ENCODE measurements at regions of chr1 and their contacts with region 1.

Region 1: GRCh38 chr1:27662707-27663393 is 9.1 kb downstream of the IFI6 start:
- DNase-seq: peak; percentile 75 to 91 (median 82)
- ATAC-seq: peak; percentile 76
- H3K4me3 ChIP-seq: no peak overlapping the region
- H3K27ac ChIP-seq: peak overlapping the region; percentile 30; the same call in 2 of the 3 replicates
- H3K4me1 ChIP-seq: peaks cover 27 to 39% of the 10 kb centered on the region in 2 experiments
- H3K27me3 ChIP-seq: no peaks in the 10 kb centered on the region
- CTCF ChIP-seq: peak; percentile 92 to 97 (median 96)
- EP300 ChIP-seq: no peak
- POLR2A ChIP-seq: no peak
- RAD21 ChIP-seq: peak; percentile 98 to 99

Region 2: GRCh38 chr1:27300341-27301051 is 362.4 kb before region 1 on chr1:
- CTCF ChIA-PET with region 1: interaction called, 5 read pairs
- POLR2A ChIA-PET with region 1: no interaction called
- in situ Hi-C with region 1: no loop called
- intact Hi-C with region 1: loop called (anchors 5 kb)
- DNase-seq: peak; percentile 88 to 93 (median 90)
- ATAC-seq: peak; percentile 95
- H3K4me3 ChIP-seq: no peak overlapping the region
- H3K27ac ChIP-seq: no peak overlapping the region
- H3K4me1 ChIP-seq: peaks cover 0 to 7% of the 10 kb centered on the region in 2 experiments; a peak in 2 of 5 replicates
- H3K27me3 ChIP-seq: no peaks in the 10 kb centered on the region
- CTCF ChIP-seq: peak; percentile 97 to 99 (median 98)
- EP300 ChIP-seq: no peak
- POLR2A ChIP-seq: no peak
- RAD21 ChIP-seq: peak; percentile 93 to 98

Region 3: GRCh38 chr1:27556781-27557595 is 105.9 kb before region 1 on chr1:
- CTCF ChIA-PET with region 1: interaction called, 4 read pairs
- POLR2A ChIA-PET with region 1: no interaction called
- in situ Hi-C with region 1: loop called (anchors 5 kb)
- intact Hi-C with region 1: loop called (anchors 5 kb)
- DNase-seq: peak; percentile 93 to 95 (median 94)
- ATAC-seq: peak; percentile 84
- H3K4me3 ChIP-seq: no peak overlapping the region
- H3K27ac ChIP-seq: peak overlapping the region; percentile 75
- H3K4me1 ChIP-seq: peaks cover 59 to 62% of the 10 kb centered on the region in 2 experiments
- H3K27me3 ChIP-seq: no peaks in the 10 kb centered on the region
- CTCF ChIP-seq: peak; percentile 91 to 93 (median 92)
- EP300 ChIP-seq: no peak; the same call in 1 of the 2 replicates
- POLR2A ChIP-seq: no peak
- RAD21 ChIP-seq: peak; percentile 79 to 89

Region 4: GRCh38 chr1:27616441-27616840 is 46.4 kb before region 1 on chr1:
- CTCF ChIA-PET with region 1: interaction called, 11 read pairs
- POLR2A ChIA-PET with region 1: interaction called, 7 read pairs
- in situ Hi-C with region 1: loop called (anchors 5 kb)
- intact Hi-C with region 1: no loop called
- DNase-seq: peak in 1 of 4 experiments; percentile 37
- ATAC-seq: peak; percentile 50
- H3K4me3 ChIP-seq: no peak overlapping the region
- H3K27ac ChIP-seq: no peak overlapping the region
- H3K4me1 ChIP-seq: peaks cover 19 to 25% of the 10 kb centered on the region in 2 experiments
- H3K27me3 ChIP-seq: peaks cover 0 to 17% of the 10 kb centered on the region in 2 experiments; a peak in 3 of 5 replicates
- CTCF ChIP-seq: peak; percentile 46 to 64 (median 54)
- EP300 ChIP-seq: no peak
- POLR2A ChIP-seq: no peak
- RAD21 ChIP-seq: no peak; a peak in 1 of 4 replicates

Region 5: GRCh38 chr1:27643701-27644625 is 18.9 kb before region 1 on chr1:
- CTCF ChIA-PET with region 1: interaction called, 3 read pairs
- POLR2A ChIA-PET with region 1: no interaction called
- in situ Hi-C with region 1: no loop called
- intact Hi-C with region 1: loop called (anchors 1 kb)
- DNase-seq: peak; percentile 70 to 78 (median 74)
- ATAC-seq: peak; percentile 95
- H3K4me3 ChIP-seq: no peak overlapping the region
- H3K27ac ChIP-seq: no peak overlapping the region
- H3K4me1 ChIP-seq: peaks cover 0 to 8% of the 10 kb centered on the region in 2 experiments; a peak in 3 of 5 replicates
- H3K27me3 ChIP-seq: no peaks in the 10 kb centered on the region
- CTCF ChIP-seq: peak; percentile 80 to 93 (median 84)
- EP300 ChIP-seq: no peak
- POLR2A ChIP-seq: no peak
- RAD21 ChIP-seq: peak; percentile 38 to 69